ENCODE measurements at regions of chr1 and their contacts with region 1.

Region 1: GRCh38 chr1:43238085-43238484 is 31.7 kb upstream of the TMEM125 start:
- DNase-seq: peak; percentile 84
- H3K4me3 Mint-ChIP-seq: no peak overlapping the region
- H3K27ac Mint-ChIP-seq: no peak overlapping the region
- H3K4me1 Mint-ChIP-seq: peaks cover 12% of the 10 kb centered on the region
- H3K27me3 Mint-ChIP-seq: no peaks in the 10 kb centered on the region

Region 2: DNA sequence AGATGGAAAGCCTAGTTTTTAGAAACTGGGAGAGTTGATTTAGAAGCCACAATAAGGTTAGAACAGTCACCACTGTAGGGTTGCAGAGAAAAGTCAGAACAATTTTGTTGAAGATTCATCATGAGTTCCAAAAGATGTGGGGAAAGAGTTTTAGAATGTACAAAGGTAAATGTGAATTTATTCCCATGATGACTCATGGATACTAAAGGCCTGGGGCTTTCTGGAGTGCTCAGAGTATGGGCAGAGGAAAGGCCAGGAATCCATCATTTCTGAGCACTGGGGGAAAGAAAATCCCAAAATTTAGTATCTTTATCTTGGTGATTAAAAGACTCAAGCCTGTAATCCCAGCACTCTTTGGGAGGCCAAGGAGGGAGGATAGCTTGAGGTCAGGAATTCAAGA is 538.1 kb before region 1 on chr1:
- intact Hi-C with region 1: no loop called
- DNase-seq: no peak
- H3K4me3 Mint-ChIP-seq: no peak overlapping the region
- H3K27ac Mint-ChIP-seq: no peak overlapping the region
- H3K4me1 Mint-ChIP-seq: peaks cover 11% of the 10 kb centered on the region
- H3K27me3 Mint-ChIP-seq: no peaks in the 10 kb centered on the region

Region 3: DNA sequence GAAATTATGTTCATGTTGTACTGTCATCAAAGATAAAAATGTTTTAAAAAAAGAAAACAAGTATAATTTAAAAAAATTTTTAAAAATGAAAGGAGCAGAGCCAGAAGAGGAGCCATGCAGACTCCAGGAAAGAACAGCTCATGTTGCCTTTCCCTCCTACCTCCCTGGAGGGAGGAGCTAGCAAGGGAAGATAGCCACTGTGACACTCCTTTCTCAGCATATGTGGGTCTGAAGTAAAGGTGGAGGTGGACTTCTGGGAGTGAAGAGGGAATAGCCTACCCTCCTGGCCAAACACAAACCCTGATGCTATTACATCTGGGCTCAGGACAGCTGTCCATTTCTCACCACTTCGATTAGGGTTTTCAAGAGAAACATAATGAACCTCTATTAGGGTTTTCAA is 333.7 kb before region 1 on chr1:
- intact Hi-C with region 1: no loop called
- DNase-seq: no peak
- H3K4me3 Mint-ChIP-seq: no peak overlapping the region
- H3K27ac Mint-ChIP-seq: no peak overlapping the region
- H3K4me1 Mint-ChIP-seq: peaks cover 2% of the 10 kb centered on the region
- H3K27me3 Mint-ChIP-seq: peaks cover 3% of the 10 kb centered on the region

Region 4: GRCh38 chr1:43414634-43415223 is 176.6 kb after region 1 on chr1:
- intact Hi-C with region 1: loop called (anchors 1 kb)
- DNase-seq: peak; percentile 88
- H3K4me3 Mint-ChIP-seq: no peak overlapping the region
- H3K27ac Mint-ChIP-seq: no peak overlapping the region
- H3K4me1 Mint-ChIP-seq: no peaks in the 10 kb centered on the region
- H3K27me3 Mint-ChIP-seq: no peaks in the 10 kb centered on the region